ENCODE measurements at regions of chr9 and their contacts with region 1.

Region 1: DNA sequence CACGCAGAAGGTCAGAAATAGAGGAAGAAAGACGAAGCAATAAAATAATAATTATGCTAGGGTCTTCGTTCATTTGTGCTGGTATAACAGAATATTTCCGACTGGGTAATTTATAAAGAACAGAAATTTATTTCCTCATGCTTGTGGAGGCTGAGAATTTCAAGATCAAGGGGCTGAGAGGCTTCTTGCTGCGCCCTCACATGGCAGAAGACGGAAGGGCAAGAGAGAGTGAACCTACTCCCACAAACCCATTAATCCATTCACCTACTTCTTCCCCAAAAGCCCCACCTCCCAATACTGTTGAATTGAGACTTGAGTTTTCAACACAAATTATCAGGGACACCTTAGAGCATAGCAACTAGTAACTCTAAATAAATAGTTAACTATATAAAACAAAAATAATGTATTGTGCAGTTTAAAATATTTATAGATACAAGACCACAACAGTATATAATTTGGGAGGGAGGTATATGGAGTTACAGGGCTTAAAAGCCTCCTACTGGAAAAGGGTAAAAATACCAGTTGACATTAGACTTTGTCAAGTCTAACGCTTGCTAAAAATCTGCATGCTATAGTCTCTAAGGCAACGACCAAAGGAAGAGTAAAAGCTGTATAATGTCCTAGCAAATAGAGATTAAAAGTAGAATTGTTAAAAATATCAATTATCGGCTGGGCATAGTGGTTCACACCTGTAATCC is 40.3 kb upstream of the NAA35 start:
- DNase-seq: no peak
- H3K4me3 Mint-ChIP-seq: no peak overlapping the region
- H3K27ac Mint-ChIP-seq: no peak overlapping the region
- H3K4me1 Mint-ChIP-seq: no peaks in the 10 kb centered on the region
- H3K27me3 Mint-ChIP-seq: peaks cover 12% of the 10 kb centered on the region

Region 2: GRCh38 chr9:85702726-85703289 is 197.8 kb before region 1 on chr9:
- intact Hi-C with region 1: loop called (anchors 1 kb)
- DNase-seq: no peak
- H3K4me3 Mint-ChIP-seq: no peak overlapping the region
- H3K27ac Mint-ChIP-seq: no peak overlapping the region
- H3K4me1 Mint-ChIP-seq: no peaks in the 10 kb centered on the region
- H3K27me3 Mint-ChIP-seq: no peaks in the 10 kb centered on the region

Region 3: DNA sequence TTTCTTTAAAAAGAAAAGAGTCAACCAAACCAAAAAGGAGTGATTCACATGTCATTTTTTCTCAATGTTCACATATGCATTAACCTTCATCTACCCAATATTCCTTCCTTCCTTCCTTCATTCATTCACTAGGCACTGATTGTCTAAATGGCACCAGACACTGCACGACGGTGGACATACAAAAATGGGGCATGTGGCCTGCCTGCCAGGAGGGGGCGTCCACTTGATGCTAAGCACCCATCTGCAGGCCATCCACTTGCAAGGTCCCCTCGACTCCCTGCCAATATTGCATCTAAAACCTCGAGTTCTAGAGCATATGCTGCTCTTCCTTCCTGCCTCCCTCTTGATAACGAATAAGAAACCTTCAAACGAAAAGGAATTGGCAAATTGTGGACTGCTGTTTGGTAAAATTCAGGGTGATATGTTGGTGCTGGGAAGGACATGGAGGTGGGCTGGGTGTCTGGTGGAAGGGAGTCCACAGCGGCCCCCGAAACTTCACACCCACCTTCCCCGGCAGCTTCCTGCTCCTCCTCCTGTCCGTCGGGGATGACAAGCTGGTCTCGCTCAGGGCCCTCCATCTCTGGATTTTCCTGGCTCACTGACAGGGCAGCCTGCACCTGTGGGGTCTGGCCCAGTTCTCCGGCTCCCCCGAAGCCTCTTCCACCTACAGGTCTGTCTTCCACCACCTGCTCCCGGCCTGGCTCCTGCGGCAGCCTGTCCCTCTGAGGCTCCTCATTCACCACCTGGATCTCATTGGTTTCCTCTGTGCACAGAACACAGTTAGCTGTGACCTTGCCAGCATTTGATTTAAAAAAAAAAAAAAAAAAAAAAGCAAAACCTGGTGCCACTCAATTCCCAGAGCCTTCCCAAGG is 134.4 kb after region 1 on chr9:
- intact Hi-C with region 1: no loop called
- DNase-seq: no peak
- H3K4me3 Mint-ChIP-seq: no peak overlapping the region
- H3K27ac Mint-ChIP-seq: no peak overlapping the region
- H3K4me1 Mint-ChIP-seq: no peaks in the 10 kb centered on the region
- H3K27me3 Mint-ChIP-seq: no peaks in the 10 kb centered on the region